ENCODE measurements at regions of chr10 and their contacts with region 1.

Region 1: GRCh38 chr10:75111367-75111906 is at the start of gene SAMD8:
- DNase-seq: peak; percentile 93
- H3K4me3 ChIP-seq: peak within 1 kb of the TSS; percentile 87 to 96
- H3K27ac ChIP-seq: peak within 1 kb of the TSS; percentile 96 to 98
- H3K4me1 ChIP-seq: no peaks in the 10 kb centered on the region
- H3K27me3 ChIP-seq: no peaks in the 10 kb centered on the region
- CTCF ChIP-seq: peak; percentile 57 to 79 (median 68)
- POLR2A ChIP-seq: peak; percentile 96
- total RNA-seq, gene SAMD8: 18.8 to 41.5 TPM

Region 2: DNA sequence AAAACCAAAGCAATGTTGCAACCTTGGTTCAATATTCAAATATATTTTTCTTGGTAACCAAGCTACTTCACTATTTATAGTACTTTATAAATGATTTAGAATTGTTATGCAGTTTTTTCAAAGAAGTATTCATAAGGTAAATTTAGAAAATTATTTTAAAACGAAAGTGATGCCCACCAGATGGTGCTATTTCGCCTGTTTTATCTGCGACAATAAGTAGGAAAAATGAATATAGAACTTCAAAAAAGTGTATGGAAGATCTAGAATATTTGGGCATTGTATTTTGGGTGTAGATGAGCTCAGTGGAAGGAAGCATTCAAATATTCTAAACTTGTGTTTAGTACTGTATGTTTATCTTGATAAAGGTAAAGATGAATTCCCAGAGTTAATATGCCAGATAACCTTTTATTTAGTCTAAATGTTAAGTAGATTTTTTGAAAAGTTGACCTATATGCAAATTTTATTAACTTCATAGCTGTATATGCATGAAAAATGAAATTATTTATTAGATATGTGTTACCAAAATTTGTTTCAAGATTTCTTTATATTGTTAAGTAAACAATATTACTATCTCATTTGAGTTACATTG is 867.2 kb before region 1 on chr10:
- intact Hi-C with region 1: loop called (anchors 5 kb)
- DNase-seq: no peak
- H3K4me3 ChIP-seq: no peak overlapping the region
- H3K27ac ChIP-seq: no peak overlapping the region
- H3K4me1 ChIP-seq: no peaks in the 10 kb centered on the region
- H3K27me3 ChIP-seq: no peaks in the 10 kb centered on the region
- CTCF ChIP-seq: peak; percentile 33 to 73 (median 66)
- POLR2A ChIP-seq: no peak

Region 3: GRCh38 chr10:74826142-74827044 is 285.0 kb before region 1 on chr10 and contains the start of gene KAT6B:
- intact Hi-C with region 1: loop called (anchors 5 kb)
- DNase-seq: peak; percentile 100
- H3K4me3 ChIP-seq: peak within 1 kb of the TSS; percentile 89 to 98
- H3K27ac ChIP-seq: peak within 1 kb of the TSS; percentile 99
- H3K4me1 ChIP-seq: peaks cover 20% of the 10 kb centered on the region
- H3K27me3 ChIP-seq: no peaks in the 10 kb centered on the region
- CTCF ChIP-seq: peak in 1 of 4 experiments; percentile 50
- POLR2A ChIP-seq: peak; percentile 69
- total RNA-seq, gene KAT6B: 28.0 to 97.8 TPM

Region 4: GRCh38 chr10:75210282-75211006 is 99.0 kb after region 1 on chr10 and contains the start of gene VDAC2:
- intact Hi-C with region 1: loop called (anchors 5 kb)
- DNase-seq: peak; percentile 86
- H3K4me3 ChIP-seq: peak within 1 kb of the TSS; percentile 96 to 100
- H3K27ac ChIP-seq: peak within 1 kb of the TSS; percentile 98 to 99
- H3K4me1 ChIP-seq: peaks cover 5% of the 10 kb centered on the region
- H3K27me3 ChIP-seq: no peaks in the 10 kb centered on the region
- CTCF ChIP-seq: peak in 2 of 4 experiments; percentile 22 to 23
- POLR2A ChIP-seq: peak; percentile 92
- total RNA-seq, gene VDAC2: 112 to 121 TPM

Region 5: DNA sequence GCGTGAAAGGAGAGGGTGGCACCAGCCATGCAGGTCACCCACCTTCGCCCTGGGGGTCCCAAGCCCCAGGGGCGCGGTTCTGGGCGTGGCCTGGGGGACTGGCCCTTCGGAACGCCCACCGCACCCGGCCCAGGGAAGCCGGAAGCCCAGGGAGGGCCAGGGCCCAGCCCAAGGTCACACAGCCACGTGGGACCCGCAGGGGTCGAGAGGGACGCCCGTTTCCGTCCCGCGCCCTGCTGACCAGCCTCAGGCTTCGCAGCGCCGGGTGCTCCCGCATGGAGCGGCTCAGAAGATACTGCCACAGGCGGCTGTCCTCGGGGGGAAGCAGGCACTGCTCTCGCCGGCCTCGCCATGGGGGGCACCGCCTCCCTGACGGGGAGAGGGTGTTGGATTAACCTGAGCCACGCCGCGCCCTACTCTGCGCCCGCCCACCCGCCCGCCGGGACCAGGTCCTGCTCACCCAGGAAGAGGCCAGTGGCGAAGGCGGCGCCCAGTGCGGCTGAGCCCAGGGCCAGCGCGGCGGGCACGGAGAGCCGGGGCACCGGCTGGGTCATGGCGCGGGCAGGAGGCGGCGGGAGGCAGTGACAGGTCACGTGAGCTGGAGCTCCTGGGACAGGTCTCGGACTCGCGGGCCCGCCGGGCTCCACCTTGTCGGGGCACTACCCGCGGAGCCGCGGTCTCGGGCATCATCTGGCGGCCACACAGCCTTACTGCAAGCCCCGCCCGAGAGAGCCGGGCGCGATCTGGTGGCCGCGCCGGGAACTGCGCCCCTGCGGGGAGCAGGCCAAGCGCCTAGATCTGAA is 124.1 kb after region 1 on chr10 and contains the start of gene COMTD1:
- intact Hi-C with region 1: loop called (anchors 2 kb)
- DNase-seq: peak; percentile 95
- H3K4me3 ChIP-seq: peak within 1 kb of the TSS; percentile 68 to 70
- H3K27ac ChIP-seq: peak within 1 kb of the TSS; percentile 79 to 81
- H3K4me1 ChIP-seq: peaks cover 5% of the 10 kb centered on the region
- H3K27me3 ChIP-seq: no peaks in the 10 kb centered on the region
- CTCF ChIP-seq: peak; percentile 100
- POLR2A ChIP-seq: peak; percentile 29
- total RNA-seq, gene COMTD1: 26.8 to 49.3 TPM

Measured in prostate gland (tissue), 2 donors.